Activated naive CD4-positive, alpha-beta T cell treated with anti-CD3 and anti-CD28 coated beads for 36 hours (primary cell): ENCODE measurements at regions of chr18 and their contacts with region 1.

Region 1: GRCh38 chr18:21327101-21327500 is 85.1 kb downstream of the GREB1L start:
- DNase-seq: no peak
- H3K4me3 Mint-ChIP-seq: no peak overlapping the region
- H3K27ac Mint-ChIP-seq: no peak overlapping the region
- H3K4me1 Mint-ChIP-seq: no peaks in the 10 kb centered on the region
- H3K27me3 Mint-ChIP-seq: peaks cover 3% of the 10 kb centered on the region

Region 2: DNA sequence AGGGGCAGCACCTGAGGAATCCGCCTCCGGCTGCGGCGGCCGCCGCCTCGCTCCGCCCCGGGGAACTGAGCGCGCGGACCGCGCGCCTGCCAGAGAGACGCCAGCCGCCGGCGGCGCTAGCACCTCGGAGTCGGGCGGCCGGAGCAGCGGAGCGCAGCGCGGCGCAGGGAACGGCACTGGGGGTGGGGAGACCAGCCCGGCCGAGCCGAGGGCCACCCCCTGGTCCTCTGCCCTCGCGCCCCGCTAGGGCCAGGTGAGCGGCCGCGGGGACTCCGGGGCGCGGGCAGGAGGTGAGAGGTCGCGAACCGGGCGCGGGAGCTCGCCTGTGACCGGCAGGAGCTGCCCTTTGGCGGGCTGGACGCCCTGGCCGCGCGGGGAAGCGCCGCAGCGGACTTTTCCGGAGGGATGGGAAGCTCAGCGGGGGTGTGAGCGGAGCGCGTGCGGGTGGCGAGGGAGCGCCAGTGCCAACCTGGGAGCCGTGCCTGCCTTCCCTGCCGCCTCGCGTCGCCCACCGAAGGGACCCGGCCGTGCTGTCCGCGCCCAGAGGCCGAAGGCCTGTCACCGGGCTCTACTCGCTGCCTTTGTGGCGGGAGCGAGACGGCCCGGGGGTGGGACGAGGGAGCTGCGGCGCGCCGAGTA is 84.8 kb before region 1 on chr18 and contains the start of gene GREB1L:
- CTCF ChIA-PET with region 1: no interaction called
- intact Hi-C with region 1: no loop called
- DNase-seq: peak; percentile 40
- H3K4me3 Mint-ChIP-seq: peak within 1 kb of the TSS; percentile 32
- H3K27ac Mint-ChIP-seq: no peak within 1 kb of the TSS
- H3K4me1 Mint-ChIP-seq: peaks cover 14% of the 10 kb centered on the region
- H3K27me3 Mint-ChIP-seq: peaks cover 49% of the 10 kb centered on the region
- total RNA-seq, gene GREB1L: not detected

Region 3: GRCh38 chr18:21270453-21270852 is 56.6 kb before region 1 on chr18:
- CTCF ChIA-PET with region 1: no interaction called
- intact Hi-C with region 1: loop called (anchors 10 kb)
- DNase-seq: no peak
- H3K4me3 Mint-ChIP-seq: no peak overlapping the region
- H3K27ac Mint-ChIP-seq: no peak overlapping the region
- H3K4me1 Mint-ChIP-seq: no peaks in the 10 kb centered on the region
- H3K27me3 Mint-ChIP-seq: peaks cover 9% of the 10 kb centered on the region

Region 4: DNA sequence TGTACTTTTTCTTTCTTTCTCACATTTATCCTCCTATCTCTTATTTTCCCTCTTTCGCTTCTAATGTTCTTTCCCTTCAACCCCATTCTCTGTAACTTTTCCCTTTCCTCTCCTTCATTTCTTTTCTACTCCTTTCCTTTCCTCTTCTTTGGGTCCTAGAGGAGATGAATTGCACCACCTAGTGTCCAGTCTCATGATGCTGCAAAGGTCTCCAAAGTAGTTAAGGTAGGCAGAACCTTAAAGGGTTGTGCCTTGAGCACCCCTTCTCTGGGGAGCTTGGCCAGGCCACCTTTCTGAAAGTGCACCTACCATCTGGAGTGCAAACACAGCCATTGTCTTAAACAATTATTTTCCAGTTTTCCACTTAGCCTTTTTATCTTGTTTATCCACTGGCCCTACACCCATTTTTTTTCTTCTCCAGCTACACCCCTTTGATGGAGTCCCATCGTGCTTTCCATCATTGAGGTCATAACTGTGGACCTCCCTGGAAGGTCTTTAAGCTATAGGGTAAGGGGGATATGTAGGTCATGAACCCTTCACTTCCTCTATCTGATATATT is 117.4 kb after region 1 on chr18:
- CTCF ChIA-PET with region 1: no interaction called
- intact Hi-C with region 1: no loop called
- DNase-seq: peak; percentile 20
- H3K4me3 Mint-ChIP-seq: no peak overlapping the region
- H3K27ac Mint-ChIP-seq: no peak overlapping the region
- H3K4me1 Mint-ChIP-seq: no peaks in the 10 kb centered on the region
- H3K27me3 Mint-ChIP-seq: peaks cover 12% of the 10 kb centered on the region